ENCODE measurements at regions of chr9 and their contacts with region 1.

Region 1: GRCh38 chr9:34974664-34975063 is 14.9 kb upstream of the DNAJB5 start:
- DNase-seq: no peak
- ATAC-seq: no peak

Region 2: GRCh38 chr9:34907044-34907443 is 67.6 kb before region 1 on chr9:
- intact Hi-C with region 1: loop called (anchors 5 kb)
- DNase-seq: no peak
- ATAC-seq: no peak